ENCODE measurements at regions of chr12 and their contacts with region 1.

Region 1: GRCh38 chr12:7108796-7109571 is at the start of gene C1RL:
- DNase-seq: peak; percentile 73 to 97
- H3K4me3 ChIP-seq: peak within 1 kb of the TSS; percentile 59 to 81
- H3K27ac ChIP-seq: peak within 1 kb of the TSS; percentile 91 to 93
- H3K4me1 ChIP-seq: peaks cover 3 to 13% of the 10 kb centered on the region in 2 donors
- H3K27me3 ChIP-seq: no peaks in the 10 kb centered on the region
- CTCF ChIP-seq: peak; percentile 95 to 100 (median 96)
- total RNA-seq, gene C1RL: 196 TPM

Region 2: DNA sequence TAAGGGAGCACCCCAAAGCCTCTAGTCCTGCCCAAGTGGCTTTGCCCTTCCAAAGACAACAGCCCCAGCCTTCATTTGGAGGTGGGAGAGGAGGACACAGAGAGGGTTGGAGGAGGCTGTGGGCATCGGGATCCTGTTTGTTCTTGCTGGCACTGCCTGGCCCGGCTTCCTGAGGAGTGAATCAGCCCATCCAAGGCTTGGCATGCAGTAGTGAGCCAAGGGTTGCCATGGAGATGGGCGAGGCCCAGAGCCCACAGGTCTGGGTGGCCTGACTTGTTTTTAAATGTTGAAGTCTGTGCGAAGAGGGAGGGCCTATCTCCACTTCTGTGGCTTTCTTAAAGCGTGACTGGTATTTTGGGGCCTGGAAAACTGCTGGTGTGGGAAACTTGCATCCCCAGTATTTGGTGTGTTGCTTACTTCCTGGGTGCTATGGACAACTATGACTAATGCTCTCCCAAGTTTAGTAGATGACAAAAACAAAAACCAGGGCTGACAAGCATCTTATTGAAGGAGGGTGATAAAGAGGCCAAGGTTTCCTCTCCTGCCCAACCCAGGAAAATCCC is 893.0 kb before region 1 on chr12:
- intact Hi-C with region 1: no loop called
- DNase-seq: peak; percentile 84 to 97
- H3K4me3 ChIP-seq: peak overlapping the region; percentile 25 to 32
- H3K27ac ChIP-seq: peak overlapping the region; percentile 93 to 94
- H3K4me1 ChIP-seq: peaks cover 30 to 89% of the 10 kb centered on the region in 2 donors
- H3K27me3 ChIP-seq: no peaks in the 10 kb centered on the region
- CTCF ChIP-seq: no peak

Region 3: DNA sequence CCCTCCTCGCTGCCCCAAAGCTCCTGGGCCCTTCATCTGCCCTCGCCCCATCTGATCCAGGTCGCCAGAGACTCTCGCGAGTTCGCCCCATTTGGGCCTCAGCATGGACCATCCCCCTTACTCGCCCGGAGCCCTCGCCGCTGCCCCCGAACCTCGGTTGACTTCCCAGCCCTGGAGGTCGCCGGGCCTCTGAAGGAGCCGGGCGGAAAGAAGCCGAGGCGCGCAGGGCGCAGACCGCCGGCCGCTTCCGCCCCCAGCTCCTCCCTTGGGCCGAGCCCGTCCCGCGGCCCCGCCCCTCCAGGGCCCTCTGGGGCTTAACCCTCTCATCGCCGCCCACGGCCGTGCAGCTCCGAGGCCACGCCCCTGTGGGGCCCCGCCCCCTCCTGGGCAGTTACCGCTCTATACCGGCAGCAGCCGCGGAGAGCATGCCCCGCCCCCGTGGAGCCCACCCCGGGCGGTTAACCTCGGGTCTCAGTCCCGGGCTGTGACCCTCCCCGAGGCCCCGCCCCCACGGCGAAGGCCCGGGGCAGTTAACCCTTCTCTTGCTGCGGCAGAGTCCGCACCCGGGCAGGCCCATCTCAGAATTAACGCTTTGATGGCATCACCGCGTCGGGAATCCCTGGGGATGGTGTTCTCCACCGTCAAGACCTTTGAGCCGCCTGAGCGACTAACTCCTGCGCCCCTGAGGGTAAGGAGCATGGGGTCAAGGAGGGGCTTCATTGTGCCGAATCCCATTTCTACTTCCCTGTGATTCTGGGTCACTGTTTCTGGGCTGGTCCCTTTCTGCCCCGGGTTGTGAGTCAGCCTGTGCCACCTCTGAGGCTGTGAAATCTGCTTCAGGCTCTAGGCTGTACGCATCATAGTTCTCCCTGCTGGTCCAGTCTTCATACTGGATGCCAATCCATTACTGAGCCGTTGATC is 235.6 kb before region 1 on chr12 and contains the start of gene SPSB2:
- intact Hi-C with region 1: loop called (anchors 5 kb)
- DNase-seq: peak; percentile 85 to 99
- H3K4me3 ChIP-seq: peak within 1 kb of the TSS; percentile 82 to 90
- H3K27ac ChIP-seq: peak within 1 kb of the TSS; percentile 85 to 92
- H3K4me1 ChIP-seq: peaks cover 13 to 28% of the 10 kb centered on the region in 2 donors
- H3K27me3 ChIP-seq: no peaks in the 10 kb centered on the region
- CTCF ChIP-seq: no peak
- total RNA-seq, gene SPSB2: 14.5 TPM

Region 4: DNA sequence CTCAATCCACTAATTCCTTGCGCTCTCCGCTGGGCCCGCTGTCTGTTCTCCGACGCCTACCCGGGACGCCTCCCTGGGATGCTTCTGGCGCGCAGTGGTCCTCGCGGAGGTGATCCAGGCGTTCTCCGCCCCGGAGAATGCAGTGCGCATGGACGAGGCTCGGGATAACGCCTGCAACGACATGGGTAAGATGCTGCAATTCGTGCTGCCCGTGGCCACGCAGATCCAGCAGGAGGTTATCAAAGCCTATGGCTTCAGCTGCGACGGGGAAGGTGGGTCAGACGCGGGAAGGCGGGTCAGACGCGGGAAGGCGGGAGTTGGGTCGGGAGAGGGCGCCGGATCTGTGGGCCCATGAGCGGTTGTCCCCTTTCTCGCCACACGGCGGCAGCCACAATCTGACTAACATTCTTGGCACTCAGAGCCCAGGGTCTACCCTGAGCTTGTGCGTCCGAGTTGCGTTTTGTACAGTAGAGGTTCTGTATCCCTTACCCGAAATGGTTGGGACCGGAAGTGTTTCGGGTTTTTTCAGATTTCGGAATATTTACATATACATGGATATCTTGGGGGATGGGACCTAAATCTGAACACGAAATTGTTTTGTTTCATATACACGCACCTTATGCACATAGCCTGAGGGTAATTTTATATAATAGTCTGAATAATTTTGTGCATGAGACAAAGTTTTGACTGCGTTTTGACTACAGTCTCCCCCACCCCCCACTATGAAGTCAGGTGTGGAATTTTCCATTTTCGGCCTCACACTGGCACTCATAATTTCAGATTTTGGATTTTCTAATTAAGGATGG is 164.4 kb before region 1 on chr12:
- intact Hi-C with region 1: loop called (anchors 2 kb)
- DNase-seq: peak; percentile 86 to 97
- H3K4me3 ChIP-seq: peak overlapping the region; percentile 80 to 91
- H3K27ac ChIP-seq: peak overlapping the region; percentile 96 to 99
- H3K4me1 ChIP-seq: peaks cover 0 to 21% of the 10 kb centered on the region in 2 donors
- H3K27me3 ChIP-seq: no peaks in the 10 kb centered on the region
- CTCF ChIP-seq: peak; percentile 77 to 95 (median 81)

Region 5: DNA sequence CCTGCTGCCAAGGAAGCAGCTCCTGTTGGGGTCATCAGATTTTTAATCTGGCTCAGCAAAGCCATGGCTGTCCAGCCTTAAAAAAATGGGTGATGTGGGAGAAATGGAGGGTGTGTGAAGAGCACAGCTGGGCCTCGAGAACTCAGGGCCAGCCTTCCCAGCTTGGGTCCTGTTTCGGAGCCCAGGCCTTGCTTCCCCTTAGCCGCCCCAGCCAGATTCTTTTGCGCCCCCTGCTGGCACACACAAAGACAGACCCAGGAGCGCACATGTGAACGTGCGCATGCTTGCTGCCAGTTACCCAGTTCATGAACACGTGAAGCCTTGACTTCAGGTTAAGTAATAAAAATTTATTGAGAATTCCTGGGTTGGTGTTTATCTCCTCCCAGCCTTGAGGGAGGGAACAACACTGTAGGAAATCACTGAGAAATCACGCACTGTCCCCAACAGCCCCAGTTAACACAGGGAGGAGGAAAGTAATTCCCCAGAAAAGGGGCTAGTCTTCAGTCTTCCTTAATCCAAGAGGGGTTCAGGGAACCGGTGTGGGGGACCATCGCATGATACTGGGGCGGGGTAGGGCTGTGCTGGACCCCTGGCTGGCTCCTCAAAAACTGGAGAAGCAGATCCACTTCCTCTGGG is 143.8 kb before region 1 on chr12:
- intact Hi-C with region 1: loop called (anchors 2 kb)
- DNase-seq: peak in 1 of 2 donors; percentile 90
- H3K4me3 ChIP-seq: no peak overlapping the region
- H3K27ac ChIP-seq: peak overlapping the region; percentile 64 to 75
- H3K4me1 ChIP-seq: peaks cover 0 to 28% of the 10 kb centered on the region in 2 donors
- H3K27me3 ChIP-seq: no peaks in the 10 kb centered on the region
- CTCF ChIP-seq: peak; percentile 82 to 88 (median 84)

Region 6: DNA sequence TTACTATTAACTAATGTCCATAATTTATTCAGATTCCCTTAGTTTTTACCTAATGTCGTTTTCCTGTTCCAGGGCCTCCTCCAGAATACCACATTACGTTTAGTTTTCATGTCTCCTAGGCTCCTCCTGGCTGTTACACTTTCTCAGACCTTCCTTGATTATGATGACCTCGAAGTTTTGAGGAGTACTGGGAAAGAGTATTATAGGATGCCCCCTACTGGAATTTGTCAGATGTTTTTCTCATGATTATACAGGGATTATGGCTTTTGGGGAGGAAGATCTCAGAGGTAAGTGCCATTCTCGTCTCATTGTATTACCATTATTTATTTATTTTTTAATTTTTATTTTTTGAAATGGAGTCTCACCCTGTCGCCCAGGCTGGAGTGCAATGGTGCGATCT is 66.1 kb before region 1 on chr12:
- intact Hi-C with region 1: no loop called
- DNase-seq: no peak
- H3K4me3 ChIP-seq: no peak overlapping the region
- H3K27ac ChIP-seq: no peak overlapping the region
- H3K4me1 ChIP-seq: no peaks in the 10 kb centered on the region
- H3K27me3 ChIP-seq: no peaks in the 10 kb centered on the region
- CTCF ChIP-seq: peak in 2 of 3 experiments; percentile 30 to 41

Region 7: DNA sequence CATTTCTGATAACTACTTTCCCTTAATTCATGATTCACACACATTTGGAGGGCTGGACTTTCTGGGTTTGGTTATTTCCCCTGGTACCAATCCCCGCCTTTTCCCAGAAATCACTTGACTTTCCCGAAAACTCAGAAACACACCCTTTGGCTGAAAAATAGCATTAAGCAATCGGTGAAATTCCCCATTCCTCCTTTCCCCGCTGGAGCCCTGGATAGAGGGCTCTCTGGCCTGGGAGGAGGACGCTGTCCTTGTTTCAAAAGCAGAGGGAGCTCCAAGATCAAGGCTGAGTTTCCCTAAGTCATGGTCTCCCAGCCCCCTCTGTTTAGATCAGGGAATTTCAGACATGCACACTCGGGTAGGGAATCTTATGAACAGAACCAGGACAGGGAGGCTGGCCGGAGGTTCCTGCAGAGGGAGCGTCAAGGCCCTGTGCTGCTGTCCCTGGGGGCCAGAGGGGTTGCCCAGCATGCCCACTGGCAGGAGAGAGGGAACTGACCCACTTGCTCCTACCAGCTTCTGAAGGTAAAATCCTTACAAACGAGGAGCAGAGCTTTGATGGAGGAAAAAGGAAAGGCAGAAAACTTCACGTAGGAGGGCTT is 48.5 kb before region 1 on chr12 and contains the start of gene C1S:
- intact Hi-C with region 1: loop called (anchors 1 kb)
- DNase-seq: peak; percentile 57 to 93
- H3K4me3 ChIP-seq: peak within 1 kb of the TSS; percentile 34 to 55
- H3K27ac ChIP-seq: peak within 1 kb of the TSS; percentile 80 to 82
- H3K4me1 ChIP-seq: peaks cover 0 to 17% of the 10 kb centered on the region in 2 donors
- H3K27me3 ChIP-seq: no peaks in the 10 kb centered on the region
- CTCF ChIP-seq: peak; percentile 81 to 92 (median 88)
- total RNA-seq, gene C1S: 273 TPM

Region 8: DNA sequence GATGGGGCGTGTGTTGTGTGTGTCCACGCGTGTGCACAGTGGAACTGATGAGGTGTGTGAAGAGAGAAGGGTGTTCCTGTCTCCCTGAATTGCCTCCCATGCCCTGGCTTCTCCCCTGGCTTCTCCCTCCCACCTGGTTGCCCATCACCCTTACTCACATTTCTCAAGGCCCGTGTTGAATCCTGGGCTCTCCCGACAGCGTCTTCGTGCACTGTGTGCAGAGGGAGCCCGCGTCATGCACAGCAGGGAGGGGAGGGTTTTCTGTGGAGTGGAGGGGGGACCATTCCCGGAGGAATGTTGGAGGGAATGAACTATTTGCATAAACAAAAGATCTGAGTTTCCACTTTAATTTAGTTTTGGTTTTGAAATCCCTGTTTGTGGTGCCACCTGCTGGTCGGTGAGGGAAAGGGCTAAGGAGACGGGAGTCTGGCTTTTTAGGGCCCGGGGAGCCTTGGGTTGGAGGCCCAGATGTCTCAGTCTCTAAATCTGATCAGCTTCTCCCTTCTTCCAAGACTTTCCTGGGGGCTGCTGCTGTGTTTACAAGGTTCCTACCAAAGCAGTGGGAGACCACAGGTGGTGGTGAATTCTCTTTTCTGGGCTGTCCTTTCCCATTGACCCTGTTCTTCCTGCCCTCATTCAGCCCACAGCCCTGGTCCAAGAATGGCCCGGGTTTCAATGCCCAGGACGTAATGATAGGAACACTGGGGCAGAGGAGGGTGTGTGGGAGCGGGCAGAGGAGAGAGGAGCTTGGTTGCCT is 16.6 kb before region 1 on chr12 and contains the start of gene C1R:
- intact Hi-C with region 1: loop called (anchors 1 kb)
- DNase-seq: peak; percentile 48 to 92
- H3K4me3 ChIP-seq: peak within 1 kb of the TSS; percentile 51 to 62
- H3K27ac ChIP-seq: peak within 1 kb of the TSS; percentile 77 to 79
- H3K4me1 ChIP-seq: peaks cover 0 to 12% of the 10 kb centered on the region in 2 donors
- H3K27me3 ChIP-seq: no peaks in the 10 kb centered on the region
- CTCF ChIP-seq: peak; percentile 86 to 91 (median 87)
- total RNA-seq, gene C1R: 1,046 TPM

Region 9: GRCh38 chr12:7129872-7130680 is 21.1 kb after region 1 on chr12 and contains the start of gene CLSTN3:
- intact Hi-C with region 1: loop called (anchors 1 kb)
- DNase-seq: peak; percentile 53 to 85
- H3K4me3 ChIP-seq: peak within 1 kb of the TSS; percentile 68 to 74
- H3K27ac ChIP-seq: peak within 1 kb of the TSS; percentile 79 to 84
- H3K4me1 ChIP-seq: peaks cover 6 to 7% of the 10 kb centered on the region in 2 donors
- H3K27me3 ChIP-seq: no peaks in the 10 kb centered on the region
- CTCF ChIP-seq: no peak
- total RNA-seq, gene CLSTN3: 132 TPM

Measured in ascending aorta (tissue), 2 donors.